ENCODE measurements at regions of chr9 and their contacts with region 1.

Region 1: DNA sequence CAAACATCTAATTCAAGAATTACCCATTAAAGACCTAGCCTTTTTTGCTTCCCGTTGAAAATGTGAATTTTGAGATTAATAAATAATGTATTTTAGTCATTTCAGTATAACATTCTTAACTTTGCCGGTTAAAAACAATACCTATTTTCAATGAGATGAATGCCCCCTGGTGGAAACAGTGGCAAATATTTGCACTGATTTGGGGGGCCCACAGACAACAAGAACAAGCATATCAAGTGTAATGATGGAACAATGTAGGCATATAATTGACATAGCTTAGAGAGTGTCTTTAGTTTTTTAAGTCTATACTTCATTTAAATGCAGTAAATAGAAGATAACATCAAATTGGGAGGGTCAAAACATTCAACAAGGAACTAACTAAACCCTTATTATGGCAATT is 111.9 kb downstream of the NTRK2 start:
- DNase-seq: peak; percentile 13
- CTCF ChIP-seq: peak; percentile 45

Region 2: GRCh38 chr9:84397151-84397728 is 384.2 kb before region 1 on chr9:
- CTCF ChIA-PET with region 1: interaction called, 19 read pairs
- POLR2A ChIA-PET with region 1: no interaction called
- DNase-seq: peak; percentile 76
- CTCF ChIP-seq: peak; percentile 91

Region 3: GRCh38 chr9:84748112-84748511 is 33.3 kb before region 1 on chr9:
- CTCF ChIA-PET with region 1: interaction called, 22 read pairs
- POLR2A ChIA-PET with region 1: no interaction called
- DNase-seq: no peak
- CTCF ChIP-seq: no peak

Region 4: GRCh38 chr9:84754461-84754860 is 27.0 kb before region 1 on chr9:
- CTCF ChIA-PET with region 1: interaction called, 22 read pairs
- POLR2A ChIA-PET with region 1: no interaction called
- DNase-seq: no peak
- CTCF ChIP-seq: no peak

Region 5: DNA sequence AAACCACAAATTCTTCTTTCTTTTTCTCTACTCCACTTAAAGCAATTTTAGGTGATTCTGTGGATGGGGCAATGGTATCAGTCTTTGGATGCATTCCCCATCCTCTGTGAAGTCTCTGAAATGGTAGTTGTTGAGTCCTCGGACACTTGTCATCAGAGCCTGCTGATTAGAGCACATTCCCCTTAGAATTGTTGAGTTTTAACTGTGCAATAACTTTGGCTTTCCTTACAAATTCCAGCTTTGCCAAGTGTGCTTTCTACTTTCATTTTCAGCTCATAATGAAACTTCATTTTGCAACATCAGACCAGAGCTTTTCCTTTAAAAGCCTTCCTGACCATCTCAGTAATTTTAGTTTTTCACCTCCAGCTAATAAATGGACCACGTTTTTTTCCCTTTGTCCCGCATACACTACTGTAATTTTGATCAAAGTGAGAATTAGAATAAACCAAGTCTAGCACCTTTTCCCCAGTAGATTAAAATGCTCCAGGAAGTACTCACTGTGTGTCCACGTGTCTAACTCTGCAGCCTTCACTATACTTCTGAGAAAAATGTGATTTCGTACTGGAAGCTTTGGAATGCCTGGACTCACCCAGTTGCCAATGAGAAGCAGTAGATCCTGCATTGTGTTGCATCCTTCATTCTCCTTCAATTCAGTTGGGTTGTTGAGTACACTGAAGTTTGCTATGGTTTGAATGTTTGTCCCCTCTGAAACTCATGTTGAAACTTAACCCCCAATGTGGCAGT is 23.7 kb after region 1 on chr9:
- CTCF ChIA-PET with region 1: interaction called, 14 read pairs
- POLR2A ChIA-PET with region 1: no interaction called
- DNase-seq: no peak
- CTCF ChIP-seq: no peak

Region 6: DNA sequence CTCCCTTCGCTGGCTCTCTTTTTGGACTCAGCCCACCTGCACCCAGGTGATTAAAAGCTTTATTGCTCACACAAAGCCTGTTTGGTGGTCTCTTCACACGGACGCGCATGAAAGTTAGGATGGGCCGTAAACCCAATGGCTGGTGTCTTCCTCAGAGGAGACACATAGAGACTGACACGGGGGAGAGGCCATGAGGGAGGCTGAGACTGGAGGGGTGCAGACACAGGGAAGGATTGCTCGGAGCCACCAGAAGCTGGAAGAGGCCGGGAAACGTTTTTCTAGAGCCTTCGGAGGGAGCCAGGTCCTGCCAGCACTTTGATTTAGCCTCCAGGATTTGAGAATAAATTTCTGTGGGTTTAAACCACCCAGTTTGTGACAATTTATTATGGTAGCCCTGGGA is 685.4 kb after region 1 on chr9:
- CTCF ChIA-PET with region 1: no interaction called
- POLR2A ChIA-PET with region 1: no interaction called
- DNase-seq: no peak
- CTCF ChIP-seq: no peak

Measured in GM10248 (cell line).